Testis (tissue), 5 donors: ENCODE measurements at regions of chr11 and their contacts with region 1.

Region 1: DNA sequence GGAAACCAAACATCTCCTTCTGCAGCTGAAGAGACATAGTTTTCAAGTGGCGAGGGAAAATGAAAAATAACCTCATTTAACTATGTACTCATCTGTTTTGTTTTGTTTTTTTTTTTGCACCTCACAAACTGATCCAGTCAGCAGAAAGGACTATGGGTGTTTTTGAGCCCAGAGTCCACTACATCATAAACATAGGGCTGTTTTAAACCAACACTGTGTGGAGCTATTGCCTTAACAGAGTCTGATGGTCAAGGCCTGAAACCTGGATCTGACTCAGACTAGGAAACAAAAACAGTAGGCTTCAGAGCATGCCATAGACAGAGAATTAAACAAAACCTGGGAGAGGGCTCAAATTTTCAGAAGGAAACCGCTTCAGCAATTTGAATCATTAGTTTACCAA is 99.3 kb upstream of the FSHB start:
- DNase-seq: peak; percentile 18
- H3K4me3 ChIP-seq: no peak overlapping the region
- H3K27ac ChIP-seq: no peak overlapping the region
- H3K4me1 ChIP-seq: no peaks in the 10 kb centered on the region
- H3K27me3 ChIP-seq: no peaks in the 10 kb centered on the region
- CTCF ChIP-seq: no peak
- POLR2A ChIP-seq: no peak

Region 2: GRCh38 chr11:30107899-30108298 is 23.6 kb before region 1 on chr11:
- intact Hi-C with region 1: no loop called
- DNase-seq: no peak
- H3K4me3 ChIP-seq: no peak overlapping the region
- H3K27ac ChIP-seq: no peak overlapping the region
- H3K4me1 ChIP-seq: no peaks in the 10 kb centered on the region
- H3K27me3 ChIP-seq: no peaks in the 10 kb centered on the region
- CTCF ChIP-seq: no peak
- POLR2A ChIP-seq: no peak

Region 3: DNA sequence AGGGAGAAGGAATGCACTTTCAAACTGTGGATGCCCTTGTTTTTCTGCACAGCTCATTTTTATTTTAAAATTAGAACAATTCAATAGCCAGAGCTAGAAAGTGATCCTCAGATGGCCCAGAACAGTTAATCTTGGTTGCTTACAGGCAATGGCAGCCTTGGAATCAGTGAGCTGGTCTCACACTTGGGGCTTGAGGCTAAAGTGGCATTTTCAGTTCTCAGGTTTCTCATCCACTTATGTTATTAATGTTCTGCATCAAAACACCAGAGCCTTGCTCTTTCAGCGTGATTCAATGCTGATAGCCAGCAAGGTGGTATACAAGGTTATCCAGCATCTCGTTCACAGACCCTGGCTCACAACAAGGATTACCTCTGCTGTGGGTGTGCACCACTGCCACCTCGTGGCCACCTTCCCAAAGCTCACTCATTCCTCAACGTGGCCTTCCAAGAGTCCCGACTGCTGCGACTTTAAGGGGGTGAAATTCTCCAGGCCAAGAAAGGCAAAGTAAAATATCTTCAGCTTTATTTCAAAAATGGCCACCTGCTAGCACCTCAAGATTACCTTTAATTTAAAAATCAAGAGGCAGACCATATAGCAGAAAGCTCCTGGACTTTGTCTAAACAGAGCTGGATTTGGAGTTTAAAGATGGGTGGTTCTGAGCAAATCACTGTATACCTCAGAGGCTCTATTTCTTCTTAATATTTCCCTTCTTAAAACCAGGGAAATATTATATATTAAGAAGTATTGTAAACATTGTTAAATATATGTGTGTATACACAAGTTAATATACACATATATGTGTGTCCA is 65.1 kb after region 1 on chr11:
- intact Hi-C with region 1: loop called (anchors 10 kb)
- DNase-seq: peak; percentile 81
- H3K4me3 ChIP-seq: no peak overlapping the region
- H3K27ac ChIP-seq: no peak overlapping the region
- H3K4me1 ChIP-seq: no peaks in the 10 kb centered on the region
- H3K27me3 ChIP-seq: no peaks in the 10 kb centered on the region
- CTCF ChIP-seq: peak; percentile 72 to 80 (median 75)
- POLR2A ChIP-seq: no peak

Region 4: DNA sequence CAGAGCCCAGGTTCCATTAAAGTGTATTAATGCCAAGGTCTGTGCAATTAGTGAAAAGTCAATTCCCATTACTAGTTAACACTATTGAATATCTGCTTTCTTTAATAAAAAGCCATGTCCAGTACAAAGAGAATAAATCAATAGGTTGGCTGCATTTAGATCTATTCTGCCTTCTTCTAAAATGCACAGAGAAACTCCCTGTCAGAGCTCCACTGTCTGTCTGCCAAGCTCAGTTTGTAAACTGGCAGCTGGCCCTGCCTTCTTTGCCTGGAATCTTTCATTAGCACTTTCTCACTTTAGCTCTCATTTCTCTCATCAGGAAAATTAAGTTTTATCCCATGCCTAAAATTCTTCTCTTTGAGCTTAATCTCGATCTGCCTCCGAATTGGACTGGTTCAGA is 227.0 kb after region 1 on chr11:
- intact Hi-C with region 1: no loop called
- DNase-seq: peak; percentile 27
- H3K4me3 ChIP-seq: no peak overlapping the region
- H3K27ac ChIP-seq: no peak overlapping the region
- H3K4me1 ChIP-seq: no peaks in the 10 kb centered on the region
- H3K27me3 ChIP-seq: no peaks in the 10 kb centered on the region
- CTCF ChIP-seq: no peak
- POLR2A ChIP-seq: no peak

Region 5: DNA sequence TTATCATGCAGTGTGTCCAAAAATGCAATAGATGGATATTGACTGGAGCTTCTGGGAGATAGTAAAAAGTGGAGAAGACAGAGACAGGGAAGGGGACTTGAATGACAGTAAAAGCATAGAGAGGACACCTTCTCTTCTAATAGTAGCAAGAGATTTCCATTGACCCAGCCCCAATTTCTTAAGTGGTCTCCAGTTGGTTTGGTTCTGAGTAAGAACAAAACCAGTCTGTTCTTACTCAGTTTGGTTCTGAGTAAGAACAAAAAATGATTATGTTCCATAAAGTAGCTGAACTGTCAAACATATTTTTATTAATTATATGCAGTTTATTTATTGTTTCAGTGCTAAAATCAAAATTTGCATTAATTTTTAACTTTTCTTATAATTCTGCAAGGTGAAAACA is 771.4 kb after region 1 on chr11:
- intact Hi-C with region 1: no loop called
- DNase-seq: no peak
- H3K4me3 ChIP-seq: no peak overlapping the region
- H3K27ac ChIP-seq: no peak overlapping the region
- H3K4me1 ChIP-seq: no peaks in the 10 kb centered on the region
- H3K27me3 ChIP-seq: no peaks in the 10 kb centered on the region
- CTCF ChIP-seq: no peak
- POLR2A ChIP-seq: no peak